ENCODE measurements at regions of chr2 and their contacts with region 1.

Region 1: DNA sequence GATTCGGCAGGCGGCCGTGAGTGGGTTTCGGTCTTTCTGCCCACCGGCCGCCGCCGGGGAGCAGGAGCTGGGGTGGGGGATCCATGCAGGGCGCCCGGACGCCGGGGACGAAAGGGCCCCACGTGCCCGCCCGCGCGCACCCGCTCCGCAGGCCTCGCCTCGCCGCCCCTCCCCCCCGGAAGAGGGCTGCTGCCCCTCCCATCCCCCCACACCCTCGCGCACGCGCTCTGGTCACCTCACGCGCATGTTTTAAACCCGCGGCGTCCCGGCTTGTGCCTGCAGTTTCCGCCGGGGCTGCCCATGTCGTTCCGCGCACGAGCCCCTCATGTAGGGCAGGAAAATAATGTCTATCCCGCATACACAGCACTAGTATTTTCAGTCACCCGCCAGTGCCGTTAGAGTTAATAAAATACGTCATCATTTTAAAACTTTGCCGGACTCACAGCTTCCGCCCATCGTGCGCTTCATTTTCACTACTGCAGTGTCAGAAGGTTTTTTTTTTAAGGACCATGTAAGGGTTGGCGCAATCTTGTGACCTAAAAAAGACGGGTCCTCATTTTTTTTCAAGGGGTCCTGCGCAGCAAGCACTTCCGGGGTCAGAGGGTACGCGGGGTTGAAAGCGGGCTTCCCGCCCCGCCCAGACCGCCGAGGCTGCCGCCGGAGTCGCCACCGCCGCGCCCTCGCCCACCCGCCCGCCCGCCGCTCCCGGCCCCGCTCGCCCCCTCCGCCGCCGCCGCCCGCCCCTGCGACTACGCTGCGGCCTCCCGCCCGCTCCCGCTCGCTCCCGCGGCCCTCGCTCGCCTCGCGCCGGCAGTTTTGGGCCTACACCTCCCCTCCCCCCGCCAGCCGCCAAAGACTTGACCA is at the start of gene PCBP1:
- DNase-seq: peak; percentile 94
- H3K4me3 ChIP-seq: peak within 1 kb of the TSS; percentile 82 to 94
- H3K27ac ChIP-seq: peak within 1 kb of the TSS; percentile 100
- H3K4me1 ChIP-seq: peaks cover 37% of the 10 kb centered on the region
- H3K27me3 ChIP-seq: no peaks in the 10 kb centered on the region
- CTCF ChIP-seq: peak in 1 of 3 experiments; percentile 15
- POLR2A ChIP-seq: no peak
- total RNA-seq, gene PCBP1: 144 to 200 TPM

Region 2: DNA sequence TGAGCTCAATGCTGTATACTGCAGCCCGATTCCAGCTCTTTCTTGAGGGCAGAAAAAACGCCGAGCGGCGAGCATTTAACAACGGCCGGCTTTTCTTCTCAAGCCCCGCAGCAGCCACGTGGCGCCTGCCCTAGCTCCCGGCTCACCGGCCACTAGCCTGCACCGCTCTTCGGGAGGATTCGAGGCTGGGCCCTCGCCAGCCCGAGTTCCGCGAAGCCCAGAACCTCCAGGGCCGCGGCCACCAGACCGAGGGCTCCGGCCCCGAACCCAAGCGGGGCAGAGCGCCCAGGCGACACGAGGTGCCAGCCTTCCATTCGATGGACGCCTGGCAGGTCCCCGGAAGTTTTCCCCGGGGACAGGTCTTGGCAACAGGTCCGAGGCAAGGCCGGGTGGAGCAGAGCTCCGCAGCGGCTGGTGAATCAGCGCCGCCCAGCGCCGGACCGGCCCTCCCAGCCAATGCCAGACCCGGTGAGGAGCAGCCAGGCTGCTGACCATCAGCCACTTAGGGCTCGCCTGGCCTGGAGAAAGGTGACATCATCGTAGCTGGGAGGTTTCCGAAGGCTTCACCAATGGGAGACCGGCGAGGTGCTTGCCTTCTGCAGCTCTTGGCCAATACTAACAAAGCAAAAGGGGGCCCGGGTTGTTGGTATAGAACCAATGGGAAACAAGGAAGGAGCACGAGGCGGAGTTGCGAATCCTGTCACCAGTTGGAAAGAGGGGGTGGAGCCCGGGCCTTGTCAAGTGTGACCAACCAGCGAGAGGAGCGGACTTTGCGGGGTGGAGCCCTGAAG is 172.7 kb before region 1 on chr2:
- intact Hi-C with region 1: loop called (anchors 10 kb)
- DNase-seq: peak; percentile 100
- H3K4me3 ChIP-seq: peak overlapping the region; percentile 62 to 90
- H3K27ac ChIP-seq: peak overlapping the region; percentile 91 to 95
- H3K4me1 ChIP-seq: peaks cover 8% of the 10 kb centered on the region
- H3K27me3 ChIP-seq: no peaks in the 10 kb centered on the region
- CTCF ChIP-seq: peak in 1 of 3 experiments; percentile 22
- POLR2A ChIP-seq: peak; percentile 96

Region 3: DNA sequence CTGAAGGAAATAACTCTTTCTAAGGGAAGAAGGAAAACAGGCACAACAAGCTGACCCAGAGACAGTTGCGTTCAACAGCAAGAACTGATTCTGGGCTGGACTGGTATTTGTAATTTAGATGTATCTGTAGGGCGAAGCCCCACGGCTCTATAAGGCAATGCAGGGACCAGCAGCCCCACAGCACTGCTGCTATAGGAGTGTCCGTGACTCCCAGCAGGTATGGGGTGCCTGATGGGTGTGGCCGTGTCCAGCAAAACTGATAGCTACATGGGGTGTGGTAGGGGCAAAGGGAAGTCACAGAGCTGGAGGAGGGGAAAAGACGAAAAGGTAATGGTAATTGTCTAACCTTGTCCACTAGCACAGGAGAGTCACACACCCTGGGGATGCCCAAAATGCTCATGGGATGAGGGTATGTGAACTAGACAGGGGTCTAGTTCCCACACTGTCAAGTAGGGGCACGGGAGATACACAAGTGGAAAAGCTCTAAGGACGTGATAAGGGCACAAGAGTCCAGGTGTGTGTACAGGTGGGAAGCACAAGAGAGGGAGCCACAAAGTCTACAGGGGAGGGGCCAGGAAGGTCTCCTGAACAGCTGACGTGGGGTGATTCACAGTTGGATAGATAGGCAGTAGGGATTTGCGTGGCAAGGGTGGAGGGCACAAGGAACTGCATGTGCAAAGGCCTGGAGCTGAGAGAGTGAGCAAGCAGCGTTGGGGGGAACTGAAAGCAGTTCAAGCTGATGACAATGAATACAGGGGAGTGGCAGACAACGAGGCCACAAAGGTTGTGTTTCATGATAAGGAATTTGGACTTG is 77.1 kb before region 1 on chr2:
- intact Hi-C with region 1: no loop called
- DNase-seq: peak; percentile 24
- H3K4me3 ChIP-seq: no peak overlapping the region
- H3K27ac ChIP-seq: no peak overlapping the region
- H3K4me1 ChIP-seq: no peaks in the 10 kb centered on the region
- H3K27me3 ChIP-seq: no peaks in the 10 kb centered on the region
- CTCF ChIP-seq: no peak
- POLR2A ChIP-seq: no peak

Region 4: DNA sequence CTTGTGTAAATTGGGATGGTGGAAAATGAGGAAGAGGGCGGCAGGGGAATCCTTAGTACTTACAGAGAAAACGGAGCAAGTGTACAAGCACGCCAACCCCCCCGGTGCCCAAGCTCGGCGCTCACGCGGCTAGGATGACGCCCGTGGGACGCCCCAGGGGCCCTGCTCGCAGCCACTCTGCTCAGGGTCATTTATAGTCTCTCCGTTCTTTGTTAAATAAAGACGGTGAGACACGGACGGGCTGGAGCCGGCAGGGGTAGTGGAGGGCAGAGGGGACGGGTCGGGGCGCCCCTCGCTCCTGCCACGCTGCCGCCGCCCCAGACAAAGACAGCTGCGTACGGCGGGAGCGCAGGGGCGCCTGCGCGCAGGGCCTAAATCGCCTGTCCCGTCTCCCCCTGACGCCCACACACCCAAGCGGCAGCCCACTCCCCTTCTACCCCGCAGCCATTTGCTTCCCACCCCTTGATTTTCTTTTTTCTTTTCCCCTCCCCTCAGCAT is 38.0 kb after region 1 on chr2:
- intact Hi-C with region 1: loop called (anchors 5 kb)
- DNase-seq: peak; percentile 69
- H3K4me3 ChIP-seq: peak overlapping the region; percentile 64 to 78
- H3K27ac ChIP-seq: peak overlapping the region; percentile 98 to 100
- H3K4me1 ChIP-seq: peaks cover 19% of the 10 kb centered on the region
- H3K27me3 ChIP-seq: no peaks in the 10 kb centered on the region
- CTCF ChIP-seq: no peak
- POLR2A ChIP-seq: no peak

Region 5: GRCh38 chr2:70142590-70143313 is 55.7 kb after region 1 on chr2:
- intact Hi-C with region 1: loop called (anchors 2 kb)
- DNase-seq: peak; percentile 98
- H3K4me3 ChIP-seq: peak overlapping the region; percentile 60 to 89
- H3K27ac ChIP-seq: peak overlapping the region; percentile 100
- H3K4me1 ChIP-seq: peaks cover 17% of the 10 kb centered on the region
- H3K27me3 ChIP-seq: no peaks in the 10 kb centered on the region
- CTCF ChIP-seq: peak; percentile 92 to 100 (median 100)
- POLR2A ChIP-seq: peak; percentile 95

Measured in testis (tissue), 5 donors.